HEK293 (cell line): ENCODE measurements at regions of chr1 and their contacts with region 1.

Region 1: DNA sequence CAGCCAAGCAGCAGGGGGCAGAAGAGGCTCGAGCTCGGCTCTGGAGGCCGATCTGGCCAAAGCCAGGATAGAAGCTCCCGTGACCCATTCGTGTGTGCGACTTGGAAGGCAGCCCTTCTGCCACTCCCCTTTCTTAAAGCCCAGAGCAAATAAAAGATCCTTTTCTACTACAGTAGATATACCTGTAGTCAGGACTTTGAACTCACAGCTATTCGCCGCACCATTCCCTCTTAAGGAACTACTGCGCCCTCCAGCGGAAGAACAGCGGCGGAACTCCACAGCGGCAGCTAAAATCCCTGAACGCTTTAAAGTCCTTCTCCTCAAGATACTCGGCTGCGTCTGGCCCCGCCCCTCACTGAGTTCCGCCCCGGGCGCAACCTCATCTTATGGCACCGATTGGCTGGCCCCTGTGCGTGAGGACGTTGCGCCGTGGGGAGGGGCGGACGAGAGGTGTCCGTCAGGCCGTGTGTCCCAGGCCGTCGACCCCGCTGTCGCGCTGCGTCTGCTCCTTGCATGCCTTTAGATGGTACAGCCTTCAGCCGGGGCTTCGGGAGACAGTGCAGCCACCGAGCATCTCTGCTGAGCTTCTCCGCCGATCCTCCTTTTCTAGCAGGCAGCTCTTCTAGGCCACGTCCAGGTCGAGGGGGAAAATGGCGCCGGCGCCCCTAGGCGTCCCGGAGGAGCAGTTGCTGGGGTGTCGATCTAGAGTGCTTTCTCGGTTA is at the start of gene LRIG2:
- H3K4me3 ChIP-seq: peak within 1 kb of the TSS; percentile 95
- H3K27ac ChIP-seq: peak within 1 kb of the TSS; percentile 70
- H3K4me1 ChIP-seq: 0 out of 2 replicates have a peak, but pooled peaks cover 2% of the 10 kb centered on the region
- CTCF ChIP-seq: peak; percentile 96

Region 2: GRCh38 chr1:112809253-112809684 is 263.6 kb before region 1 on chr1:
- CTCF ChIA-PET with region 1: interaction called, 12 read pairs
- POLR2A ChIA-PET with region 1: no interaction called
- H3K4me3 ChIP-seq: no peak overlapping the region
- H3K27ac ChIP-seq: no peak overlapping the region
- H3K4me1 ChIP-seq: no peaks in the 10 kb centered on the region
- CTCF ChIP-seq: peak; percentile 84

Region 3: GRCh38 chr1:112955781-112956543 is 117.0 kb before region 1 on chr1 and contains the start of gene SLC16A1:
- CTCF ChIA-PET with region 1: interaction called, 5 read pairs
- POLR2A ChIA-PET with region 1: interaction called, 19 read pairs
- H3K4me3 ChIP-seq: peak within 1 kb of the TSS; percentile 88
- H3K27ac ChIP-seq: peak within 1 kb of the TSS; percentile 86
- H3K4me1 ChIP-seq: no peaks in the 10 kb centered on the region
- CTCF ChIP-seq: peak; percentile 96

Region 4: GRCh38 chr1:113057006-113057405 is 15.9 kb before region 1 on chr1:
- CTCF ChIA-PET with region 1: interaction called, 58 read pairs
- POLR2A ChIA-PET with region 1: interaction called, 13 read pairs
- H3K4me3 ChIP-seq: no peak overlapping the region
- H3K27ac ChIP-seq: no peak overlapping the region
- H3K4me1 ChIP-seq: no peaks in the 10 kb centered on the region; the same call in 1 of the 2 replicates
- CTCF ChIP-seq: no peak

Region 5: DNA sequence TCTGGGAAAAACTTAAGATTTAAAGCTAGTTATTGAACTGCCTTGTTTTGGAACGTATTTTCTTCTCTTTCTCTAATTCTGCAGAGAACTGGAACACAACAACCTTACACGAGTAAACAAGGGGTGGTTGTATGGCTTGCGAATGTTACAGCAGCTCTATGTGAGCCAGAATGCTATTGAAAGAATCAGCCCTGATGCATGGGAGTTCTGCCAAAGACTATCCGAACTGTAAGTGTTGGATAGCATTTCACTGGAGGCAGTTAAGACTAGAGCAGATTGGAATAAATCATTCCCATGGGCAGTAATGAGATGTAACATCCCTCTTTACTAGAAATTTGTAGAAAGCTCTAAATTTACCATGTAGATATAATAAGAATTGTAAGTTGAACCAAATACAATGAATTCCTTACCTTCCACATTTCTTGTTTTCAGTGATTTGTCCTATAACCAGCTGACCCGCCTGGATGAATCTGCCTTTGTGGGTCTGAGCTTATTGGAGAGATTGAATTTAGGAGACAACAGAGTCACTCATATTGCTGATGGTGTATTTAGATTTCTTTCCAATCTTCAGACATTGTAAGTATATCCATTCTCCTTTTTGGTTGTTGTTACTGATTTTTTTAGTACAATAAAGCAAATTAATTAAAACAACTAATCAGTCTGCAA is 23.0 kb after region 1 on chr1:
- CTCF ChIA-PET with region 1: interaction called, 12 read pairs
- POLR2A ChIA-PET with region 1: no interaction called
- H3K4me3 ChIP-seq: no peak overlapping the region
- H3K27ac ChIP-seq: no peak overlapping the region
- H3K4me1 ChIP-seq: no peaks in the 10 kb centered on the region
- CTCF ChIP-seq: no peak